A549 (cell line): ENCODE measurements at regions of chr17 and their contacts with region 1.

Region 1: DNA sequence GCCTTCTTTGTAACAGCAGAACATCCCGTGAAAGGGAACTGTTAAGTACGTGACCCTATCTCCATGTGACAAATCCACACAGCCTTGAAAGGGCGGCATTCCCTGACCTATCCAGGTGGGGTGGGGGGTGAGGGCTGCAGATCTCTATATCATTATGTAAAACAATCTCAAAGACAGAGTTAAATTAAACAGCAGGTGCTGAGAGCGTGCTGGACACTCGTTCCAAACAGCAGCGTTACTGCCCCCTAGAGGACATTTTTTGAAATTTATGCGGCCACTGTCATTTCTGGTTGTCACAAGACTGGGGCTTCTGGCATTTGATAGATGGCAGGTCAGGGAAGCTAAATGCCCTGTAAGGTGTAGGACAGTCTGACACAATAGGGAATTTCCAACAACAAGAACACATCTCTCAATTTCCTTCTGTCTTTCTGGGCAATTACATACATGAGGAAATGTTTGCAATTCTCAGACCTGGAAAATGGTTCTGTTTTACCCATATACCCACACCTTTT is 6.7 kb upstream of the SLC25A39 start:
- DNase-seq: peak; percentile 84
- ATAC-seq: peak; percentile 52 to 57
- H3K4me3 ChIP-seq: no peak overlapping the region
- H3K27ac ChIP-seq: no peak overlapping the region
- H3K4me1 ChIP-seq: peaks cover 8% of the 10 kb centered on the region
- CTCF ChIP-seq: peak; percentile 96
- EP300 ChIP-seq: no peak
- POLR2A ChIP-seq: no peak
- RAD21 ChIP-seq: peak; percentile 74 to 86

Region 2: DNA sequence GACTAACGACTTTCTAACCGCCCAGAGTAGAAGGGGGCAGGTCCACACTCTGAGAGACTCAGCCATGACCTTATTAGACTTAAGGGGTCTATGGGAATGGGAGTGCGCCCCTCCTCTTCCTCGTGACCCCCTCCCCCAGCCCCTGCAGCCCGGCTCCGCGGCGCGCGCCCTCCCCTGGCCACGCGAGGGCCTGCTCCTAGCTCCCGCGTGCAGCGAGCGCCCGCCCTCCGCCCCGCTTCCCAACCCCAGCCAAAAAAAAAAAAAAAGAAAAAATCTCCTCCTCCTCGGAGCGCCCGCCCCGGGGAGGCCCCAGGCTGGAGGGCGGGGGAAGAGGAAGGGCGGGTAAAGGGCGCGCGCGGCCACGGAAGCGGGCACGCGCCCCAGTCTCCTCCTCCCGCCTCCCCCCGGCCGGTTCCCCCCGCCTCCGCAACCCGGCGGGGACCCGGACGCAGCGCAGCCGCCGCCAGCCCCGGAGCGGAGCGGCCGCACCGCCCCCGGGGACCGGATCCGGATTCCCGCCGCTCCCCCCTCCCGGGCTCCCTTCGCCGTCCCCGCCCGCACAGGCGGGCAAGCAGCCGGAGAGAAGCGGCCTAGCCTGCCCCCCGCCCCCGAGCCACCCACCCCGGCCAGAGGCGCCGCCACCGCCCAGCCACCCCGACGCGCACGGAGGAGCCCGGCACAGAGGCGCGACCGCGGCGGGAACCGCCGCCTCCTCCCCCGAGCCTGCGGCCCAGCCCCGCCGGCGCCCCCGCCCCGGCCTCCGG is 112.8 kb before region 1 on chr17:
- CTCF ChIA-PET with region 1: interaction called, 246 read pairs
- POLR2A ChIA-PET with region 1: interaction called, 14 read pairs
- DNase-seq: peak; percentile 75 to 93
- ATAC-seq: peak; percentile 10 to 38
- H3K4me3 ChIP-seq: peak overlapping the region; percentile 89
- H3K27ac ChIP-seq: peak overlapping the region; percentile 97 to 99
- H3K4me1 ChIP-seq: peaks cover 25% of the 10 kb centered on the region
- CTCF ChIP-seq: peak; percentile 67
- EP300 ChIP-seq: no peak
- POLR2A ChIP-seq: 0 out of 2 replicates have a peak, but pooled peaks have one; percentile 23
- RAD21 ChIP-seq: no peak; a peak in 2 of 5 replicates

Region 3: GRCh38 chr17:44308865-44309264 is 22.4 kb before region 1 on chr17:
- CTCF ChIA-PET with region 1: interaction called, 31 read pairs
- POLR2A ChIA-PET with region 1: no interaction called
- DNase-seq: no peak
- ATAC-seq: peak in 1 of 2 experiments; percentile 4; a peak in 1 of 6 replicates
- H3K4me3 ChIP-seq: no peak overlapping the region
- H3K27ac ChIP-seq: no peak overlapping the region
- H3K4me1 ChIP-seq: peaks cover 15% of the 10 kb centered on the region
- CTCF ChIP-seq: no peak
- EP300 ChIP-seq: no peak
- POLR2A ChIP-seq: no peak
- RAD21 ChIP-seq: no peak

Region 4: GRCh38 chr17:44344939-44345453 is 13.7 kb after region 1 on chr17 and contains the start of gene GRN:
- CTCF ChIA-PET with region 1: interaction called, 327 read pairs
- POLR2A ChIA-PET with region 1: interaction called, 5 read pairs
- DNase-seq: peak; percentile 100
- ATAC-seq: peak; percentile 89 to 99
- H3K4me3 ChIP-seq: peak within 1 kb of the TSS; percentile 92
- H3K27ac ChIP-seq: peak within 1 kb of the TSS; percentile 81 to 85
- H3K4me1 ChIP-seq: peaks cover 9% of the 10 kb centered on the region
- CTCF ChIP-seq: no peak
- EP300 ChIP-seq: no peak
- POLR2A ChIP-seq: peak; percentile 73
- RAD21 ChIP-seq: no peak
- polyA plus RNA-seq, gene GRN: 111 and 147 TPM in 2 replicates

Region 5: GRCh38 chr17:44444735-44445105 is 113.4 kb after region 1 on chr17:
- CTCF ChIA-PET with region 1: no interaction called
- POLR2A ChIA-PET with region 1: no interaction called
- DNase-seq: peak in 1 of 2 experiments; percentile 65
- ATAC-seq: peak; percentile 56 to 74; a peak in 5 of 6 replicates
- H3K4me3 ChIP-seq: no peak overlapping the region
- H3K27ac ChIP-seq: peak overlapping the region; percentile 65 to 82
- H3K4me1 ChIP-seq: peaks cover 20% of the 10 kb centered on the region
- CTCF ChIP-seq: no peak
- EP300 ChIP-seq: no peak
- POLR2A ChIP-seq: no peak
- RAD21 ChIP-seq: no peak

Region 6: DNA sequence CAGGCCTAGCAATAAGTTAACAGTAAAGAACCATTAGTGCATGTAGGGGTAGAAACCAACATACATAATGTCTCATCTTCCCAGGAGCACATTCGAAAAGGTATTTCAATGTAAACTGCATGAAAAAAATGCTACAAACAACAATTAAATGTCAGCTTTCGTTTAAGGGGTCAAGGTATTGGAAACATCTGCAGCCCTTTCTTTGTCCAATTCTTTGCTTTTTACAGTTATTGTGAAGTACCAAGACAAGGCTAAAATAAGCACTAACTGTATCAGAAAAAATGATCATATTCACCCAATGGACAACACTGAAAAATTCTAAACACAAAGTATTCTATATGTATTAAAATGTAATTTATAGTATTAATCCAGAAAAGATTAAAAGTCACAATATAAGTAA is 134.0 kb after region 1 on chr17:
- CTCF ChIA-PET with region 1: no interaction called
- POLR2A ChIA-PET with region 1: no interaction called
- DNase-seq: no peak
- ATAC-seq: no peak
- H3K4me3 ChIP-seq: no peak overlapping the region
- H3K27ac ChIP-seq: no peak overlapping the region
- H3K4me1 ChIP-seq: peaks cover 25% of the 10 kb centered on the region
- CTCF ChIP-seq: no peak
- EP300 ChIP-seq: no peak
- POLR2A ChIP-seq: no peak
- RAD21 ChIP-seq: no peak